Activated CD4-positive, alpha-beta T cell treated with anti-CD3 and anti-CD28 coated beads for 36 hours (primary cell): ENCODE measurements at regions of chr2 and their contacts with region 1.

Region 1: GRCh38 chr2:216666461-216667233 is 28.7 kb downstream of the IGFBP5 start:
- DNase-seq: peak; percentile 80
- ATAC-seq: peak; percentile 85
- H3K4me3 Mint-ChIP-seq: no peak overlapping the region
- H3K27ac Mint-ChIP-seq: no peak overlapping the region
- H3K4me1 Mint-ChIP-seq: no peaks in the 10 kb centered on the region
- H3K27me3 Mint-ChIP-seq: peaks cover 2% of the 10 kb centered on the region

Region 2: DNA sequence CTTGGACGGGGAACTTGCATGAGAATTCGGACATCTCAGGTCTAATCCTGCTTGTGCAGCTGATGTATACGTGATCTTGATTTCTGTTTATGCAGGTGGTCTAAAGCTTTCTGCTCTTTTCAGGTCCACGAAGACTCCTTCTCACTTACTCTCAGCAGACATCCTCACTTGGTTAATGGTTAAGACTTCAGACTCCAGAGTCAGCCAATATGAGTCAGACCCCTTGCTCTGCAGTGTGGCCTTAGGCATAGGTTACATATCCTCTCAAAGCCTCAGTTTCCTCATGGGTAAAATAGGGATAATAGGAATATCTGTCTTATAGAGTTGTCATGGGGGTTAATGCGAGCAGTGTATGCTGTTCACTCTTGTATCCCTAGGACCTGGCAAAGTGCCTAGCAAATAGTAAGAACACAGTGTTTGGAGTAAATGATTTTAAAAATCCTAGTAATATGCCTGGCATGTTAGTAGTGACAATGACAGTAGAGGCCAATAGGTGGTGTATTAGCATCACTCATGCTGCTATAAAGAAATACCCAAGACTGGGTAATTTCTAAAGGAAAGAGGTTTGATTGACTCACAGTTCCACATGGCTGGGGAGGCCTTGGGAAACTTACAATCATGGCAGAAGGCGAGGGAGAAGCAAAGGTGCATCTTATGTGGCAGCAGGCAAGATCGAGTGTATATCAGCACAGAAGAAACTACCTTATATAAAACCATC is 515.2 kb before region 1 on chr2:
- CTCF ChIA-PET with region 1: no interaction called
- POLR2A ChIA-PET with region 1: no interaction called
- intact Hi-C with region 1: loop called in 1 of 2 experiments (anchors 5 kb)
- DNase-seq: no peak
- ATAC-seq: peak; percentile 60
- H3K4me3 Mint-ChIP-seq: no peak overlapping the region
- H3K27ac Mint-ChIP-seq: peak overlapping the region; percentile 73
- H3K4me1 Mint-ChIP-seq: peaks cover 31% of the 10 kb centered on the region
- H3K27me3 Mint-ChIP-seq: no peaks in the 10 kb centered on the region

Region 3: GRCh38 chr2:216519154-216519762 is 147.4 kb before region 1 on chr2:
- CTCF ChIA-PET with region 1: interaction called, 195 read pairs
- POLR2A ChIA-PET with region 1: no interaction called
- intact Hi-C with region 1: loop called (anchors 1 kb)
- DNase-seq: peak; percentile 69
- ATAC-seq: peak; percentile 79
- H3K4me3 Mint-ChIP-seq: no peak overlapping the region
- H3K27ac Mint-ChIP-seq: no peak overlapping the region
- H3K4me1 Mint-ChIP-seq: no peaks in the 10 kb centered on the region
- H3K27me3 Mint-ChIP-seq: no peaks in the 10 kb centered on the region

Region 4: DNA sequence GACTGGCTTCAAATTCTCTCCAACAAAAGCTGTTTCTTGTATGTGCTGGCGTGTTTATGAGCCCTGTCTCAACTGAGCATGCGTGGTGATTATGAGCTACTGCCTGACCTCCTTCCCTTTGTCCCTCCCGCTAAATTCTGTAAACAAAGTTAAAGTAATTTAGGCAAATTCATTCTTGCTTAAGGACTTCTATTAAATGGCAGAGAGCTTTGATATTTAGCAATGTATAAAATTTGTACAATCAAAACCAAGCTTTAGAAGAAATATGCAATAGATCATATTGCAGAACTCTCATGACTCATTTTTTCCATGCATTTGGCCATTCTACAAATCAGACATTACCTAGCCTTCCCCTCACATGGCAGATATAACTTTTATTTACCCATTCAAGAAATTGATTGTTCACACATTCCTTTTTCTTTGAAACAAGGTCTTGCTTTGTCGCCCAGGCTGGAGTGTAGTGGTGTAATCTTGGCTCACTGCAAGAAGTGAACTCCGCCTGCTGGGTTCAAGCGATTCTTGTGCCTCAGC is 15.2 kb before region 1 on chr2:
- CTCF ChIA-PET with region 1: interaction called, 26 read pairs
- POLR2A ChIA-PET with region 1: no interaction called
- intact Hi-C with region 1: no loop called
- DNase-seq: no peak
- ATAC-seq: no peak
- H3K4me3 Mint-ChIP-seq: no peak overlapping the region
- H3K27ac Mint-ChIP-seq: no peak overlapping the region
- H3K4me1 Mint-ChIP-seq: no peaks in the 10 kb centered on the region
- H3K27me3 Mint-ChIP-seq: no peaks in the 10 kb centered on the region

Region 5: GRCh38 chr2:218618102-218618860 is 1951.6 kb after region 1 on chr2:
- CTCF ChIA-PET with region 1: no interaction called
- POLR2A ChIA-PET with region 1: no interaction called
- intact Hi-C with region 1: no loop called
- DNase-seq: no peak
- ATAC-seq: no peak
- H3K4me3 Mint-ChIP-seq: no peak overlapping the region
- H3K27ac Mint-ChIP-seq: no peak overlapping the region
- H3K4me1 Mint-ChIP-seq: no peaks in the 10 kb centered on the region
- H3K27me3 Mint-ChIP-seq: no peaks in the 10 kb centered on the region